ENCODE measurements at regions of chr14 and their contacts with region 1.

Region 1: DNA sequence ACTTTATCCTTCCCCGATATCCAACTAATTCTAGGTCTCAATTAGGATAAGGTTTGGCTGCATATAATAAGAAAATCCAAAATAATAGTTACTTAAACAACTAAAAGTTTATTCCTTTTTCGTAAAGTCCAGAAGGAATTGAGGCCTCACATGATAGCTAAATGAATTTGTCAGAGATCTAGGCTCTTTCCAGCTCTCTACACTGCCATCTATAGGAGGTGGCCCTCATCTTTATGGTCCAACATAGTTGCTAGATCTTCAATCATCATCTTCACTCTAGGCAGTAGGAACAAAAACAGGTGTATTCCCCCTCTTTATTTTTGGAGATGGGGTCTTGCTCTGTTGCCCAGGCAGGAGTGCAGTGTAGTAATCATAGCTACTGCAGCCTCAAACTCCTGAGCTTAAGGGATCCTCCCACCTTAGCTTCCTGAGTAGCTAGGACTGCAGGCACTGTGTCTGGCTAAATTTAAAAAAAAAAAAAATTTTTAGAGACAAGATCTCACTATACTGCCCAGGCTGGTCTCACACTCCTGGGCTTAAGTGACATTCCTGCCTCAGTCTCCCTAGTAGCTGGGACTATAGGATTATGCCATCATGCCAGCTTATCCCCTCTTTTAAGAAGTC is 46.5 kb upstream of the SAV1 start:
- DNase-seq: peak; percentile 59
- CTCF ChIP-seq: peak; percentile 59

Region 2: GRCh38 chr14:50599700-50600444 is 114.7 kb before region 1 on chr14:
- CTCF ChIA-PET with region 1: interaction called, 10 read pairs
- POLR2A ChIA-PET with region 1: no interaction called
- DNase-seq: peak; percentile 17
- CTCF ChIP-seq: peak; percentile 54

Region 3: GRCh38 chr14:50688875-50689274 is 25.7 kb before region 1 on chr14:
- CTCF ChIA-PET with region 1: interaction called, 10 read pairs
- POLR2A ChIA-PET with region 1: no interaction called
- DNase-seq: no peak
- CTCF ChIP-seq: no peak

Region 4: DNA sequence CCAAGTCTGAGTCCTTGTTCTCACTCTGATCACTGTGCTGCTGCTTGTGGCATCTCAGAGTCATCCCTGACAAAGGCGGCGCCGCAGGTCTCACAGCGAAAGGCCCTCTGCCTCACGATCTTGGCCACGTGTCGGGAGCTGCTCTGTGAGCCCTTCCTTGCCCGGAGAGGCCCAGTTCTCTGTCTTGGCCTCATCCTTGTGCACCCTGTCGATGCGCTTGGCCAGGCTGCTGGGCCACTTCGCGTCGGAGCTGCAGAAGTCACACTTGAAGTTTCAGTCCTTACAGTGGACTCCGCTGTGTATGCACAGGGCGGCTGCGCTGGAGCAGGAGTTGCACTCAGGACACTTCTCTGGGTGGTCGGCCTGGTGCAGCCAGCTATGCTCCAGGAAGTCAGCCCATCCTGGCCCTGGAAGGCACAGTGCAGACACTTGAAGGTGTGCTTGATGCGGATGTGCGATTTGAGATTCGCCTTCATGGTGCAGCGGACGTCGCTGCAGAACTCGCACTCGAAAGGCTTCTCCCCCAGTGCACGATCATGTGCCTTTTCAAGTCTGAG is 10.0 kb before region 1 on chr14:
- CTCF ChIA-PET with region 1: interaction called, 18 read pairs
- POLR2A ChIA-PET with region 1: no interaction called
- DNase-seq: no peak
- CTCF ChIP-seq: no peak

Region 5: GRCh38 chr14:50762001-50762930 is 47.7 kb after region 1 on chr14:
- CTCF ChIA-PET with region 1: interaction called, 18 read pairs
- POLR2A ChIA-PET with region 1: interaction called, 7 read pairs
- DNase-seq: peak; percentile 69
- CTCF ChIP-seq: no peak

Measured in GM10248 (cell line).